Activated CD4-positive, alpha-beta T cell treated with anti-CD3 and anti-CD28 coated beads for 36 hours (primary cell): ENCODE measurements at regions of chr7 and their contacts with region 1.

Region 1: GRCh38 chr7:64562626-64563275 is at the start of gene ZNF680:
- DNase-seq: peak; percentile 94
- ATAC-seq: peak; percentile 99
- H3K4me3 Mint-ChIP-seq: peak within 1 kb of the TSS; percentile 99
- H3K27ac Mint-ChIP-seq: peak within 1 kb of the TSS; percentile 100
- H3K4me1 Mint-ChIP-seq: peaks cover 19% of the 10 kb centered on the region
- H3K27me3 Mint-ChIP-seq: no peaks in the 10 kb centered on the region
- total RNA-seq, gene ZNF680: 12.5 to 12.6 TPM

Region 2: DNA sequence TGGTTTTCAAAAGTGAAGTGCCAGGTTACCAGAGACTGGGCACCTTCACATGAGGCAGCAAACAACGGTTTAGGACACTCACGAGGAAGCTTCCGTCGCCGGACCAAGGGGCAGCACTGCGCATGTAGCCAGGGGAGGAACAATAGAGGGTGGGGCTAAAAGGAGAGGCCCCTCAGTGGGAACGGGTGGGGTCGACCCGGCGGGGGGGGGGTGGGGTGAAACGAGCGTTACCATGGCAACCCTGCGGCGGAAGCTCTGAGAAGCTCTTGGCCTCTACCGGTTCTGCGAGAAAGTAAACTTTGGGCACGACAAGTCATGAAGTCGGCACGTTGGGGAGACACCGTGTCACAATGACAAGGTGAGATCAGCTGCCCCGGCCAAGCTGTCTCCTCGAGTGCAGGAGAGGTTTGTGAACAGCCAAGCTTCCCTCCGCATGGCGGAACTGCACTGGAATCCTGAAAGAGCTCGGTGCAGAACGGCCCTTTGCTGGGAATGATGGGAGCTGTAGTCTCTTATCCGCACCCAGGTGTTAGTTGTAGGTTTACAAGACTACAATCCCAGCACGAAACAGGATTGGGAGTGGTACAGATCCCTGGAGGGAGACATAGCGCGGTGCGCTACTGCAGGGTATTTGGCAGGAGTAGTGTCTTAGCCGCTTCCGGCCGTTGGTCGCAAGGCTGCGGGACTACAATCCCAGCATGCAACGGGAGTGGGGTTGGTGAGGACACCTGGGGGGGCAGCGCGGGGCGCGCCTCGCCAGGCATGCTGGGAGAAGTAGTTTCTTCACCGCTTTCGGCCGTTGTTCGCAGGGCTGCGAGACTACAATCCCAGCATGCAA is 636.9 kb before region 1 on chr7:
- CTCF ChIA-PET with region 1: no interaction called
- POLR2A ChIA-PET with region 1: no interaction called
- intact Hi-C with region 1: loop called in 1 of 2 experiments (anchors 10 kb)
- DNase-seq: peak; percentile 95
- ATAC-seq: peak; percentile 97
- H3K4me3 Mint-ChIP-seq: peak overlapping the region; percentile 87
- H3K27ac Mint-ChIP-seq: peak overlapping the region; percentile 93
- H3K4me1 Mint-ChIP-seq: peaks cover 16% of the 10 kb centered on the region
- H3K27me3 Mint-ChIP-seq: no peaks in the 10 kb centered on the region

Region 3: GRCh38 chr7:64313740-64314491 is 248.8 kb before region 1 on chr7 and contains the start of gene ZNF736:
- CTCF ChIA-PET with region 1: interaction called, 3 read pairs
- POLR2A ChIA-PET with region 1: interaction called, 4 read pairs
- intact Hi-C with region 1: loop called in 1 of 2 experiments (anchors 1 kb)
- DNase-seq: peak; percentile 93
- ATAC-seq: peak; percentile 100
- H3K4me3 Mint-ChIP-seq: peak within 1 kb of the TSS; percentile 89
- H3K27ac Mint-ChIP-seq: peak within 1 kb of the TSS; percentile 99
- H3K4me1 Mint-ChIP-seq: peaks cover 30% of the 10 kb centered on the region
- H3K27me3 Mint-ChIP-seq: no peaks in the 10 kb centered on the region
- total RNA-seq, gene ZNF736: 23.5 to 25.5 TPM

Region 4: GRCh38 chr7:64665980-64666662 is 103.4 kb after region 1 on chr7 and contains the start of gene ZNF107:
- CTCF ChIA-PET with region 1: no interaction called
- POLR2A ChIA-PET with region 1: no interaction called
- intact Hi-C with region 1: loop called (anchors 2 kb)
- DNase-seq: peak; percentile 92
- ATAC-seq: peak; percentile 100
- H3K4me3 Mint-ChIP-seq: peak within 1 kb of the TSS; percentile 95
- H3K27ac Mint-ChIP-seq: peak within 1 kb of the TSS; percentile 97
- H3K4me1 Mint-ChIP-seq: peaks cover 48% of the 10 kb centered on the region
- H3K27me3 Mint-ChIP-seq: no peaks in the 10 kb centered on the region
- total RNA-seq, gene ZNF107: 16.5 to 19.7 TPM

Region 5: DNA sequence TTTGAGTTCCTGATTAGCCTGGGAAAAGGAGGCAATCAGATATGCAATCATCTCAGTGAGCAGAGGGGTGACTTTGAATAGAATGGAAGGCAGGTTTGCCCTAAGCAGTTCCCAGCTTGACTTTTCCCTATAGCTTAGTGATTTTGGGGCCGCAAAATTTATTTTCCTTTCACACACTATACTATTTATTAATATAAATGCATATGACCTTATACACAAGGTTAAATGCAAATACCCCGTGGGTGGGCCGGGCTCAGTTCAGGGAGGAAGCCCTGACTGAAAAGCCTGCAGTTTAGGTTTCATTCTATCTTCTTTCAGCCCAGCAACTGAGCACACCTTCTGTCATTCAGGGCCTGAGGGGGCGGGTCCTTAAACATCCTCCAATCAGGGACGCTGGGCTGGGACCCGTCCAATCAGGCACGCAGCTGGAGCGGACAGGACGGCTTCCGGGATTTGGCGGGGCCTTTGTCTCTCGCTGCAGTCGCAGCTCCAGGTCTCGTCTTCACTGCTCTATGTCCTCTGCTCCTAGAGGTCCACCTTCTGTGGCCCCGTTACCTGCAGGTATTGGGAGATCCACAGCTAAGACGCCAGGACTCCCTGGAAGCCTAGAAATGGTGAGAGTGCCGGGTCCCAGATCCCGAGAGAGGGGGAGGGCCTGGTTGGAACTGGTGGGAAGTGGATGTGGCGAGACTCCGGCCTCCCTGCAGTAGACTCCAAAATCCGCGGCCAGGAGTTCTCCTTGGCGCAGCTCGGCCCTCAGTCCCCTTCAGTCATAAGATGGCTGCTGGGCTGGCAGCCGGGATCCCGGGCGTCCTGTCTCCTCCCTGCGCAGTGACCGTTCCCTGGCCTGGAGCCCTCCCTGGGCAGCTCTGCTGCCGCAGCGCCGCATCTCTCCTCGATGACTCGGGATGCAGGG is 340.3 kb after region 1 on chr7 and contains the start of gene ZNF273:
- CTCF ChIA-PET with region 1: no interaction called
- POLR2A ChIA-PET with region 1: no interaction called
- intact Hi-C with region 1: loop called (anchors 2 to 10 kb)
- DNase-seq: peak; percentile 96
- ATAC-seq: peak; percentile 100
- H3K4me3 Mint-ChIP-seq: peak within 1 kb of the TSS; percentile 98
- H3K27ac Mint-ChIP-seq: peak within 1 kb of the TSS; percentile 95
- H3K4me1 Mint-ChIP-seq: peaks cover 44% of the 10 kb centered on the region
- H3K27me3 Mint-ChIP-seq: no peaks in the 10 kb centered on the region
- total RNA-seq, gene ZNF273: 12.5 to 13.3 TPM